ENCODE measurements at regions of chr15 and their contacts with region 1.

Region 1: GRCh38 chr15:77496710-77497103 is 76.0 kb downstream of the HMG20A start:
- DNase-seq: peak; percentile 97
- ATAC-seq: peak; percentile 82
- H3K4me3 ChIP-seq: no peak overlapping the region
- H3K27ac ChIP-seq: peak overlapping the region; percentile 68
- H3K4me1 ChIP-seq: peaks cover 28% of the 10 kb centered on the region
- H3K27me3 ChIP-seq: no peaks in the 10 kb centered on the region
- CTCF ChIP-seq: peak; percentile 95
- POLR2A ChIP-seq: 0 out of 2 replicates have a peak, but pooled peaks have one; percentile 37
- RAD21 ChIP-seq: peak; percentile 99

Region 2: GRCh38 chr15:77107531-77108355 is 389.0 kb before region 1 on chr15:
- CTCF ChIA-PET with region 1: no interaction called
- POLR2A ChIA-PET with region 1: no interaction called
- dilution Hi-C with region 1: no loop called
- in situ Hi-C with region 1: loop called (anchors 10 kb)
- intact Hi-C with region 1: loop called (anchors 1 kb)
- DNase-seq: peak; percentile 60
- ATAC-seq: peak; percentile 82
- H3K4me3 ChIP-seq: no peak overlapping the region
- H3K27ac ChIP-seq: no peak overlapping the region
- H3K4me1 ChIP-seq: peaks cover 8% of the 10 kb centered on the region
- H3K27me3 ChIP-seq: no peaks in the 10 kb centered on the region
- CTCF ChIP-seq: peak; percentile 65
- POLR2A ChIP-seq: no peak
- RAD21 ChIP-seq: peak; percentile 79

Region 3: GRCh38 chr15:77186594-77187011 is 310.1 kb before region 1 on chr15:
- CTCF ChIA-PET with region 1: interaction called, 6 read pairs
- POLR2A ChIA-PET with region 1: no interaction called
- dilution Hi-C with region 1: no loop called
- in situ Hi-C with region 1: no loop called
- intact Hi-C with region 1: loop called (anchors 1 kb)
- DNase-seq: peak; percentile 47
- ATAC-seq: peak; percentile 55; the same call in 1 of the 2 replicates
- H3K4me3 ChIP-seq: no peak overlapping the region
- H3K27ac ChIP-seq: no peak overlapping the region
- H3K4me1 ChIP-seq: peaks cover 3% of the 10 kb centered on the region
- H3K27me3 ChIP-seq: no peaks in the 10 kb centered on the region
- CTCF ChIP-seq: peak; percentile 62
- POLR2A ChIP-seq: no peak
- RAD21 ChIP-seq: peak; percentile 66

Region 4: DNA sequence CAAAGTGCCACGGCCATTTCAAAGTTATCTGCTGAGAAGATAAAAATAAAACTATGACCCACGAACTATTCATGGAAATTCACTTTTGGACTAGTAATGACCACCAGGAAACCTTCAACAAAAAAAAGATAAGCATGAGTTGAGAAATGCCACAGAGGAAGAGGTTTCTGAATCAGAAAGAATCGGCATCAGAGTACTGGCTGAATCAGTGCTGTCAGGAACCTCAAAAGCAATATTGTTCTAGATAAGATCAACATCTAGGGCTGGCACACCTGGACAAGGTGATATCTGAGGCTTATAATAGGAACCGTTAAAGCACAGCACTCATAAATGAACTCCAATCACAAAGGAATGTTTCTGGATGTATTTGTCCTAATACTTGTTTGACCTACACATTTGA is 149.5 kb before region 1 on chr15:
- CTCF ChIA-PET with region 1: no interaction called
- POLR2A ChIA-PET with region 1: no interaction called
- dilution Hi-C with region 1: no loop called
- in situ Hi-C with region 1: no loop called
- intact Hi-C with region 1: no loop called
- DNase-seq: no peak
- ATAC-seq: no peak
- H3K4me3 ChIP-seq: no peak overlapping the region
- H3K27ac ChIP-seq: no peak overlapping the region
- H3K4me1 ChIP-seq: no peaks in the 10 kb centered on the region; the same call in 1 of the 2 replicates
- H3K27me3 ChIP-seq: no peaks in the 10 kb centered on the region
- CTCF ChIP-seq: no peak
- POLR2A ChIP-seq: no peak
- RAD21 ChIP-seq: no peak

Region 5: DNA sequence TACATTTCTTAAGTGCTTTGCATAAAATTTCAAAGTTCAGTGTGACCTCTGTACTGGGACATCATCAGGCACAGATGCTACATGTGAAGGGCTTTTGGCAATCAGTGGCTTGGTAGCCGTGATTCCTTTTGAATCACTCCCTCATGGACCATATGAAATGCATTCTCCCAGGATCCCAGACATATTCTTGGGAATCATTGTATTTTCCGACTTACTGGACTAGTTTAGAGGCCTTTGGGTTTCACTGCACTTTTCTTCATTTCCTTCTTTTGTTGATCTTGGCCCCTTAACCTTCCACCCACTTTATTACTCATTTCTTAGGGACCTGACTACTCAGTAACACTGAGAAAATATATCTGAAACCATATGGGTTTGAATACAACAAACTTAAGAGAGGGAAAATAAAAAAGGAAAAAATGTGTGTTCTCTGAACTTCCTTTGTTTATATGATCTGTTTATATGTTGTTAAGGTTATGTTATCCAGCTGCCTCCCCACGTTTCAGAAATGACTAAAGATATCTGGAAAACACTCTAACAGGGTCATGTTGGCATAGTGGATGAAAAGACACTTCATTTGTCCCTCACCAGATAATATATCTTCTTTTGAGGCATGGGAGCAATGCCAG is 40.9 kb before region 1 on chr15:
- CTCF ChIA-PET with region 1: no interaction called
- POLR2A ChIA-PET with region 1: no interaction called
- dilution Hi-C with region 1: no loop called
- in situ Hi-C with region 1: no loop called
- intact Hi-C with region 1: loop called (anchors 5 kb)
- DNase-seq: peak; percentile 87
- ATAC-seq: peak; percentile 74
- H3K4me3 ChIP-seq: no peak overlapping the region
- H3K27ac ChIP-seq: peak overlapping the region; percentile 78
- H3K4me1 ChIP-seq: peaks cover 25% of the 10 kb centered on the region
- H3K27me3 ChIP-seq: no peaks in the 10 kb centered on the region
- CTCF ChIP-seq: no peak
- POLR2A ChIP-seq: no peak
- RAD21 ChIP-seq: no peak

Region 6: GRCh38 chr15:77543159-77543882 is 46.6 kb after region 1 on chr15:
- CTCF ChIA-PET with region 1: interaction called, 16 read pairs
- POLR2A ChIA-PET with region 1: no interaction called
- dilution Hi-C with region 1: no loop called
- in situ Hi-C with region 1: no loop called
- intact Hi-C with region 1: loop called (anchors 2 kb)
- DNase-seq: peak; percentile 78
- ATAC-seq: peak; percentile 89
- H3K4me3 ChIP-seq: peak overlapping the region; percentile 11; the same call in 1 of the 2 replicates
- H3K27ac ChIP-seq: peak overlapping the region; percentile 25; the same call in 1 of the 2 replicates
- H3K4me1 ChIP-seq: peaks cover 18% of the 10 kb centered on the region
- H3K27me3 ChIP-seq: no peaks in the 10 kb centered on the region
- CTCF ChIP-seq: peak; percentile 99
- POLR2A ChIP-seq: no peak
- RAD21 ChIP-seq: peak; percentile 99

Measured in IMR-90 (cell line).